Heart left ventricle (tissue), 16 donors: ENCODE measurements at regions of chr1 and their contacts with region 1.

Region 1: DNA sequence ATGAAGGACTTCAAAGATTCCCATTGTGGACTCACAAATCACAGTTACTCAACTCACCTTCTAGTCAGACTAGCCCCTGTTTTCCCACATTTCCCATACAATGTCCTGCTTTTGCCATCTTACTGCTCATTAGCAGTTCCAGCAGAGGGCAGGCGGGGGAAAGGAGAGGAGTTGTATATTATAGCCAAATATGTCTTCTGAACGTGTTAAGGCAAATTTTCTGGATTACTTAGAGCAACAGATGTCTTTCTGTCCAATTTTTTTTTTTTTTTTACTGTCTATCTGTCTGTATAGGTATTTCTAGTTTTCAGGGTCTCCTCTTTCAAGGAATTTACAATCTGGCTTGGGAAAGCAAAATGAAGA is 29.9 kb upstream of the DDAH1 start:
- DNase-seq: peak in 1 of 5 donors; percentile 11
- ATAC-seq: peak in 2 of 4 donors; percentile 36 to 61
- H3K4me3 ChIP-seq: no peak overlapping the region
- H3K27ac ChIP-seq: no peak overlapping the region
- H3K4me1 ChIP-seq: no peaks in the 10 kb centered on the region
- H3K27me3 ChIP-seq: no peaks in the 10 kb centered on the region
- CTCF ChIP-seq: peak in 10 of 12 donors; percentile 4 to 46 (median 34)
- POLR2A ChIP-seq: no peak

Region 2: DNA sequence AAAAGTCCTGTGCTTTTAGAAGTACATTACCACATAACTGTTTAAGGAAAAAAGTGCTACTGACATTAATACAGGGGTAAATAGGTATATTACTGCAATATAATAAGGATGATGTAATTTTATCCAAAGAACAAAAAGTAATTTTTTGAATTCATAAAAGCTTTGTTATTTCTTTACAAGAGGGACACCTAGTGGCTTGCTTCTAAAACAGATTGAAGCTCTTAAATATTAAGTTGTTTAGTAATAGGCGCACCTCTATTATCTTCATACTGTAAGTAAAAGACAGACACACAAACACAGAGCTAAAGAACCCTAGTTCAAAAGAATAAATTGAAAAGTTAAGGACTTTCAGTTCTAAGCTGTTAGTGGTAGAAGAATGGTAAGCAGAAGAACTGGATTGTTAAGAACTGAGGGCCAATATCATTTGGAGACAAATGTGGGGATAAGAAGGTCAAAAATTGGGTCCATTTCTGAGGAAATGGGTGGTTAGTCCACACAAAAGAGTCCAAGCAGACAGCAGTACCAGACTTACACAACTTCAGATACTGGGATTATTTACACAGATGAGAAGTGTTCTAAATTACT is 197.9 kb after region 1 on chr1:
- intact Hi-C with region 1: loop called in 6 of 10 experiments (anchors 5 to 10 kb)
- DNase-seq: no peak
- ATAC-seq: peak in 2 of 4 donors; percentile 35 to 47
- H3K4me3 ChIP-seq: no peak overlapping the region
- H3K27ac ChIP-seq: peak overlapping the region in 3 of 12 donors; percentile 4 to 10 (median 9)
- H3K4me1 ChIP-seq: peaks cover 0 to 19% (median 7%) of the 10 kb centered on the region in 12 donors
- H3K27me3 ChIP-seq: no peaks in the 10 kb centered on the region
- CTCF ChIP-seq: peak; percentile 25 to 69 (median 52)
- POLR2A ChIP-seq: no peak